MCF 10A (cell line): ENCODE measurements at regions of chr14 and their contacts with region 1.

Region 1: GRCh38 chr14:65361920-65362319 is 50.6 kb upstream of the FUT8 start:
- DNase-seq: peak; percentile 50
- H3K4me3 Mint-ChIP-seq: no peak overlapping the region
- H3K27ac Mint-ChIP-seq: no peak overlapping the region
- H3K4me1 Mint-ChIP-seq: peaks cover 19% of the 10 kb centered on the region
- H3K27me3 Mint-ChIP-seq: no peaks in the 10 kb centered on the region
- CTCF ChIP-seq: no peak

Region 2: GRCh38 chr14:65336191-65336591 is 25.7 kb before region 1 on chr14:
- CTCF ChIA-PET with region 1: no interaction called
- POLR2A ChIA-PET with region 1: no interaction called
- intact Hi-C with region 1: no loop called
- DNase-seq: no peak
- H3K4me3 Mint-ChIP-seq: no peak overlapping the region
- H3K27ac Mint-ChIP-seq: no peak overlapping the region
- H3K4me1 Mint-ChIP-seq: peaks cover 6% of the 10 kb centered on the region
- H3K27me3 Mint-ChIP-seq: no peaks in the 10 kb centered on the region
- CTCF ChIP-seq: no peak

Region 3: DNA sequence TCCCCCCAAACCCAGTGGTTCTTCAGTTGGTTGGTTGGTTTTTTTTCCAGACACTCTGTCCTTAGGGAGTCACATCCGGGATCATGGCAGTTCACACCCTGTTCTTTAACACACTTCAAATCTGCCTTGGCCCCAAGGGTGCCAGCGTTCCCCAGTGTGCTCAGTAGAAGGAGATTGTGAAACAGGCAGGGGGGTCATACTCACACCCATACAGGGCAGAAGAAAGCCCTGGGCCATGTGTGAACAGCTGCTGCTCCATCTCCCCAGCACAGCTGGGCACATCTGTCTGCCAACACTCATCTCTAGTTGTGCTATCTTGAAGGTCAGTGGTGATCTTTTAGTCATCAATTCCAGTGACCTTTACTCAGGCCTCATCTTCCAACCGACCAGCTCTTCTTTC is 13.8 kb before region 1 on chr14:
- CTCF ChIA-PET with region 1: interaction called, 11 read pairs
- POLR2A ChIA-PET with region 1: no interaction called
- intact Hi-C with region 1: no loop called
- DNase-seq: no peak
- H3K4me3 Mint-ChIP-seq: no peak overlapping the region
- H3K27ac Mint-ChIP-seq: peak overlapping the region; percentile 0
- H3K4me1 Mint-ChIP-seq: peaks cover 26% of the 10 kb centered on the region
- H3K27me3 Mint-ChIP-seq: no peaks in the 10 kb centered on the region
- CTCF ChIP-seq: no peak